ENCODE measurements at regions of chr10 and their contacts with region 1.

Region 1: GRCh38 chr10:6721480-6721879 is 141.4 kb upstream of the PRKCQ start:
- DNase-seq: peak; percentile 94
- H3K4me3 Mint-ChIP-seq: peak overlapping the region; percentile 55
- H3K27ac Mint-ChIP-seq: peak overlapping the region; percentile 95
- H3K4me1 Mint-ChIP-seq: peaks cover 29% of the 10 kb centered on the region
- H3K27me3 Mint-ChIP-seq: no peaks in the 10 kb centered on the region
- CTCF ChIP-seq: peak; percentile 57

Region 2: DNA sequence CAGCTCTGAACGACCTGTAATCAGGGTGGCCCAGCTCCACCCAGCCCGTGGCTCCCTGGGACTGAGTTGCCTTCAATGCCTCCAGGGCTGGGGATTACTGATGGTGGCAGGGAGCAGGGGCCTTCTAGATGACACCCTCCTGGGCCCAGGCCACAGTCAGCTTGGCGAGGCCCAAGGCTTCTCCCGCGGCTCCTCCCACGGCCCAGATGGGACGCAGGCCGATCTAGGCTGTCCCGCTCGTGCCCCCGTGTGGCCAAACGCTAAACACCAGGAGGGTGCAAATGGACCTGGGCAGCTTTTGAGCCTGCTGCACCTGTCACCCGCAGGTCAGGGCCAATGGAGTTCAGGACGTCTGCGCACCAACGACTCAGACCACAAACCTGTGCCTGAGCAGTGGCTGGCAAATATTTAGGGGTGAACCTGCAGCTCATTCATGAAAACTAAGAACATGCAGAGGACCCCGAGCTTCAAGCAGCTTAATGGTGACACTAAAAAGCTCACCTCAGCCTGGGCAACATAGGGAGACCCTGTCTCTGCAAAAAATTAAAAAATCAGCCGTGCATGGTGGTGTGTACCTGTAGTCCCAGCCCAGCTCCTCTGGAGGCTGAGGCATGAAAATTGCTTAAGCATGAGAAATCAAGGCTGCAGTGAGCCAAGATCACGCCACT is 1098.3 kb before region 1 on chr10:
- CTCF ChIA-PET with region 1: no interaction called
- POLR2A ChIA-PET with region 1: no interaction called
- intact Hi-C with region 1: no loop called
- DNase-seq: peak; percentile 89
- H3K4me3 Mint-ChIP-seq: no peak overlapping the region
- H3K27ac Mint-ChIP-seq: no peak overlapping the region
- H3K4me1 Mint-ChIP-seq: peaks cover 10% of the 10 kb centered on the region
- H3K27me3 Mint-ChIP-seq: no peaks in the 10 kb centered on the region
- CTCF ChIP-seq: peak; percentile 88

Region 3: DNA sequence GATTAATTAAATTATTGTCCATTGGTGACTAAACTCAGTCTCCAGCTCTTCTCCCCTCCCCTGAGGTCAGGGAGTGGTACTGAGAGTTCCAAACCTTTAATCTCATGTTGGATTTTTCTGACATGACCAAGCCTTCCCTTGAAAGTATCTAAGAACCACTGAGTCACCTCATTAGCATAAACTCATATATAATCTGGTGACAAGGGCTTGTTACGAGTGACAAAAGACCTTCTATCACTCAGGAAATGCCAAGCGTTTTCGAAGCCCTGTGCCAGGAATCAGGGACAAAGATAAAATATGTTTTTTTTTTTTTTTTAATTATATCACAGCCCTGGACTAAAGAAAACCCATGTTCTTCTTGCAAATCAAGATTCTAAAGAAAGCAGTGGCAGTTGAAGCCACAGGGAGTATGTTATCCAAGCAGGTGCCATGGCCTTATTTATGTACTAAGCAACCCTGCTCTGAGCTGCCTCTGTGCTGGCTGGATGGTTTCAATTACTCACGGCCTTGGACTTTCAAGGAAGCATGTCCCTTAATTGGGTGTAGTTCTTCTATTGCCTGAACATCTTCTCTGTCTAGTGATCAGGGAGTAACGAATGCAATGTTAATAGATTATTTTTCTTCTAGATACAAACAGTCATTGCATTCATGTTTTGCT is 27.6 kb after region 1 on chr10:
- CTCF ChIA-PET with region 1: interaction called, 3 read pairs
- POLR2A ChIA-PET with region 1: interaction called, 12 read pairs
- intact Hi-C with region 1: no loop called
- DNase-seq: peak; percentile 61
- H3K4me3 Mint-ChIP-seq: peak overlapping the region; percentile 13
- H3K27ac Mint-ChIP-seq: peak overlapping the region; percentile 68
- H3K4me1 Mint-ChIP-seq: peaks cover 40% of the 10 kb centered on the region
- H3K27me3 Mint-ChIP-seq: no peaks in the 10 kb centered on the region
- CTCF ChIP-seq: no peak

Region 4: GRCh38 chr10:6843481-6843881 is 122.0 kb after region 1 on chr10:
- CTCF ChIA-PET with region 1: no interaction called
- POLR2A ChIA-PET with region 1: no interaction called
- intact Hi-C with region 1: loop called (anchors 10 kb)
- DNase-seq: no peak
- H3K4me3 Mint-ChIP-seq: no peak overlapping the region
- H3K27ac Mint-ChIP-seq: no peak overlapping the region
- H3K4me1 Mint-ChIP-seq: peaks cover 20% of the 10 kb centered on the region
- H3K27me3 Mint-ChIP-seq: no peaks in the 10 kb centered on the region
- CTCF ChIP-seq: no peak

Region 5: DNA sequence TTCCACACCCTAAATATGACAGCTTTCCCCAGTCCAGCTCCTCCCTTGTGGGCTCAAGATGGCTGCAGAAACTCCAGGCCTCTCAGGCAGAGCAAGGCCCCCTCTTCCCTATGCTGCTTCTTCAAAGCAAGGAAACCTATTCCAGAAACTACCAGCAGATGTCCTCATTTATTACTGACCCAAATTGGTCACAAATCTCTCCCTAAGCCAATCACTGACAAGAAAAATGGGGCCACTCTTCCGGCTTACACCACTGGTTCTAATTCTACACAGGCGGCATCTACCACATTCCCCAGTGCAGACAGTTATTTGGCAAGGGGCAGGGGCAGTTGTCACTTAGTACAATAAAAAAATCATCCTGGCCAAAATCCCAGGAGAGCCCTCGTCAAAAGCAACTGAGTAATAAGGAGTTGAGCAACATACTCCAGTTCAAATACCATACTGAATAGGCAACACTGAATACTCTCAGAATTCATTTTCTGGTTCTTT is 539.0 kb after region 1 on chr10:
- CTCF ChIA-PET with region 1: interaction called, 3 read pairs
- POLR2A ChIA-PET with region 1: interaction called, 5 read pairs
- intact Hi-C with region 1: loop called (anchors 10 kb)
- DNase-seq: peak; percentile 97
- H3K4me3 Mint-ChIP-seq: peak overlapping the region; percentile 29
- H3K27ac Mint-ChIP-seq: peak overlapping the region; percentile 47
- H3K4me1 Mint-ChIP-seq: peaks cover 46% of the 10 kb centered on the region
- H3K27me3 Mint-ChIP-seq: no peaks in the 10 kb centered on the region
- CTCF ChIP-seq: peak; percentile 52

Region 6: GRCh38 chr10:7417103-7417623 is 695.7 kb after region 1 on chr10:
- CTCF ChIA-PET with region 1: interaction called, 10 read pairs
- POLR2A ChIA-PET with region 1: interaction called, 3 read pairs
- intact Hi-C with region 1: loop called (anchors 1 kb)
- DNase-seq: peak; percentile 55
- H3K4me3 Mint-ChIP-seq: no peak overlapping the region
- H3K27ac Mint-ChIP-seq: no peak overlapping the region
- H3K4me1 Mint-ChIP-seq: no peaks in the 10 kb centered on the region
- H3K27me3 Mint-ChIP-seq: peaks cover 28% of the 10 kb centered on the region
- CTCF ChIP-seq: peak; percentile 65